Endothelial cell of umbilical vein (primary cell): ENCODE measurements at regions of chr2 and their contacts with region 1.

Region 1: DNA sequence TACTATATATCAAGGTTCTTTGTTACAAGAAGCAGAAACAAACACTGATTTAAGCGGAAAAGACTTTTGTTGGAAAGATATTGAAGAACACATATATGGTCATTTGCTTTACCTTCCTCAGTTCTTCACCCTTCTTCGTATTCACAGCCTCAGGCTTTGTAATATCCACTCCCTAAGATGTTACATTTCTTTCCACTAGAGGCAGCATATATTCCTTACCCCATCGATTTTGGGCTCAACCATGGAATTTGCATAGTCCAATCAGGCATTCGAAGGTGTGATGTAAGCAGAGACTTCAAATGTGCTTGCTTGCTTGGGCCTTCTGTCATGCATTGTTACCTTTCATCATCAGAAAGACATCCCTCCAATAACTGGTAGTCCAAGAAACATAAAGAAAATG is 287.4 kb downstream of the PID1 start:
- DNase-seq: no peak
- H3K4me3 ChIP-seq: no peak overlapping the region
- H3K27ac ChIP-seq: no peak overlapping the region
- H3K4me1 ChIP-seq: no peaks in the 10 kb centered on the region
- H3K27me3 ChIP-seq: no peaks in the 10 kb centered on the region
- CTCF ChIP-seq: no peak
- POLR2A ChIP-seq: no peak

Region 2: DNA sequence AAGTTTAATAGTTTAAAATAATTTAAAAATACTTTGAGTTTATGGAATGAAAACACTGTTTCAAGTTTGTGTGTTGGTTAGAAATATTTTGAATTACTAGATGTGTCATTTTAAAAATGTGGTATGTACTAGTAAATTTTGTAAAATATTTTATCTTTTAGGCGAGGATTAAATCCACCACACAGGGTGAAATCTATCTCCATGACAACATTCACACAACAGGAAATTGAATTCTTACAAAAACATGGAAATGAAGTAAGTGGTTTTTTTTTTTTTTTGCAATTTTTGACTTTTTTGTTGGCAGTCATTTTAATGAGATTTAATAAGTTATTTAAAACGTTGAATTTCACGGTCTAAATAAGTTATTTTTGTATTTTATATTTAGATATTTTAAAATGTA is 1492.3 kb before region 1 on chr2:
- CTCF ChIA-PET with region 1: no interaction called
- POLR2A ChIA-PET with region 1: no interaction called
- dilution Hi-C with region 1: no loop called
- intact Hi-C with region 1: loop called (anchors 5 kb)
- DNase-seq: no peak
- H3K4me3 ChIP-seq: no peak overlapping the region
- H3K27ac ChIP-seq: no peak overlapping the region
- H3K4me1 ChIP-seq: peaks cover 5% of the 10 kb centered on the region
- H3K27me3 ChIP-seq: no peaks in the 10 kb centered on the region
- CTCF ChIP-seq: no peak
- POLR2A ChIP-seq: no peak

Region 3: DNA sequence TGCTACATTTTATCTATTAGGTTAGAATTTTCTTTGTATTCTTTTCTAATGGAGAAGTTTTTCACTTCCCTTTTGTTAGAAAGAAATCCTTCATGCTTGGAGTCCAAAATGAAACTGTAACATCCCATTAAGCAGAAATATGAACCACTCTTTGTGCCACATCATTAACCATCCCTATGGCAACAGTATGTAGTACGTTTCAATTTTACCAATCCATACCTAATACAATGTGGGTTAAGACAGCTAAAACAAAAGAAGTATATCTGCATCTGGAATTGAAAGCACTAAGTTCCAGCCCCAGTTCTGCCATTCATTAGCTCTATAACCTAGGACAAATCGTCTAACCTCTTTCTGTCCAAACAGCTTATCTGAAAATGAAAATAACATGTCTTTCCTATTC is 393.0 kb before region 1 on chr2:
- CTCF ChIA-PET with region 1: no interaction called
- POLR2A ChIA-PET with region 1: no interaction called
- dilution Hi-C with region 1: no loop called
- intact Hi-C with region 1: no loop called
- DNase-seq: no peak
- H3K4me3 ChIP-seq: no peak overlapping the region
- H3K27ac ChIP-seq: no peak overlapping the region
- H3K4me1 ChIP-seq: no peaks in the 10 kb centered on the region
- H3K27me3 ChIP-seq: no peaks in the 10 kb centered on the region
- CTCF ChIP-seq: no peak
- POLR2A ChIP-seq: no peak